ENCODE measurements at regions of chr6 and their contacts with region 1.

Region 1: DNA sequence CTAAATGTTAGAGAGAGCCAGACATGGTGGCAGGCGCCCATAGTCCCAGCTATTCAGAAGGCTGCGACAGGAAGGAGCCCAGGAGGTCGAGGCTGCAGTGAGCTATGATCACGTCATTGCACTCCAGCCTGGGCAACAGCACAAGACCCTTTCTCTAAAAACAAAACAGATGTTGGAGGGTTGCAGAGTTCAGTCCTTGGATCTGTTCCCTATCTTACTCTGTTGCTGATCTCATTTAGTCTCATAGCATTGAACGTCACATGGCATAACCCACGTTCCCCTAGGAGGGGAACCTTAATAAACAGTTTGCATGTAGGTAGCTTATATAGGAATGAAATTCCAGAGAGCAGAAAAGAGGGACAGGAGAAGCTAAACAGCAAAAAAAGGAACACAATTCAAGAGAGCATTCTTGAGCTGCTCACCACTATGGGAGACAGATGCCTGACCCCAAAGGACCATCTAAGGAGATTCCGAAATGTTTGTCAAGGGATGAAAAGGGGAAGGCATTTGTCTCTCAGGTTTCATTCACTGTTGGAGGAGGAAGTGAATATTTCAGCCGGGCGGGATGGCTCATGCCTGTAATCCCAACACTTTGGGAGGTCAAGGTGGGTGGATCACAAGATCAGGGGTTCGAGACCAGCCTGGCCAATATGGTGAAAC is 54.6 kb upstream of the PIM1 start:
- DNase-seq: no peak
- H3K4me3 ChIP-seq: no peak overlapping the region
- H3K27ac ChIP-seq: no peak overlapping the region
- H3K4me1 ChIP-seq: no peaks in the 10 kb centered on the region
- H3K27me3 ChIP-seq: no peaks in the 10 kb centered on the region
- CTCF ChIP-seq: no peak

Region 2: GRCh38 chr6:37177077-37177934 is 61.9 kb after region 1 on chr6:
- CTCF ChIA-PET with region 1: no interaction called
- dilution Hi-C with region 1: loop called (anchors 5 kb)
- in situ Hi-C with region 1: no loop called
- intact Hi-C with region 1: no loop called
- DNase-seq: no peak
- H3K4me3 ChIP-seq: no peak overlapping the region
- H3K27ac ChIP-seq: no peak overlapping the region
- H3K4me1 ChIP-seq: peaks cover 4% of the 10 kb centered on the region
- H3K27me3 ChIP-seq: no peaks in the 10 kb centered on the region
- CTCF ChIP-seq: no peak